Heart right ventricle (tissue), 16 donors: ENCODE measurements at regions of chr3 and their contacts with region 1.

Region 1: DNA sequence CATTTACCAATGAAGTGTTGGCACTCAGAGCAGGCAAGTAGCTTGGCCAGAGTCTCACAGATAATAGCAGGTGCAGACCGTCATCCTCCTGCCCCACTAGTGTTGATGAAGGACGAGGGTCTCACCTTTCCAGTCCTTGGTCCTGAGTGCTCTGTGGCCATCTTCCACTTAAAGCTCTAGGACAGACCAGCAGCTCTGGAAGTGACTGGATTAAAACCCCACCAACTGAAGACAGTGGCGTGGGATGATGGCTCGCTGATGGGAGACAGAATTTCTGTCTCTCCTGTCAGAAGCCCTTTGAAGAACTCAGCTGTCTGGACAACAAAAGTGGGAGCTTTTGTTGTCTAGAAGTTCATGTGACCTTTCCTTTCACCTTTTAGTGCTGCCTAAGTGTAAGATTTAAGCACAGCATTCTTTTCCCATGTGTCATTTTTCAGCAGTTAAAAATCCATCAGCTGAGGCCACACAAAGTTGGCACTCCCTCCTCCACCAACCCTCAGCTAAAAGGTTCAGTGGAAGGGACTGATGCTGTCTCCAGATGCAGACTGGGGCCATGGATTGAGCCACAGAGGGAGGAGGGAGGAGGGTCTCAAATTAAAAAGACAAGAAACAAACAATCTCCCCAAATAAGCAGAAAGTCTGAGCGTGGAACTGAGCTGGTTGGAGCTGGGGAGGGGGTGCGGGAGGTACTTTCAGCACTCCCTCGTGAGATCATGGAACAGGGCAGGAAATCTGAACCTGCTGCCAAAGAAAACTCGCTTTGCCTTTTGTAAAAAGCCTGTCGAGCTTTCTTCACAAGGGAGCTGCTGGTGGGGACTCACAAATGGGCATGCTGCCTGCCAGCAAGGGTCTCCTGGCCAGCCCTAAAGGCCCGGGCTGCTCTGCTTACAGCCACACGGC is 148.5 kb upstream of the CTDSPL start:
- DNase-seq: peak in 1 of 2 donors; percentile 46
- ATAC-seq: peak; percentile 15 to 73 (median 56)
- H3K4me3 ChIP-seq: no peak overlapping the region
- H3K27ac ChIP-seq: peak overlapping the region in 7 of 10 donors; percentile 36 to 79 (median 63)
- H3K4me1 ChIP-seq: peaks cover 12 to 56% (median 36%) of the 10 kb centered on the region in 9 donors
- H3K27me3 ChIP-seq: no peaks in the 10 kb centered on the region
- CTCF ChIP-seq: no peak

Region 2: GRCh38 chr3:37689645-37690356 is 23.4 kb before region 1 on chr3:
- intact Hi-C with region 1: loop called in 1 of 10 experiments (anchors 1 kb)
- DNase-seq: peak in 1 of 2 donors; percentile 28
- ATAC-seq: peak; percentile 31 to 96 (median 82)
- H3K4me3 ChIP-seq: no peak overlapping the region
- H3K27ac ChIP-seq: peak overlapping the region in 8 of 10 donors; percentile 27 to 54 (median 40)
- H3K4me1 ChIP-seq: peaks cover 0 to 24% (median 5%) of the 10 kb centered on the region in 9 donors
- H3K27me3 ChIP-seq: no peaks in the 10 kb centered on the region
- CTCF ChIP-seq: peak in 1 of 9 donors; percentile 14

Region 3: DNA sequence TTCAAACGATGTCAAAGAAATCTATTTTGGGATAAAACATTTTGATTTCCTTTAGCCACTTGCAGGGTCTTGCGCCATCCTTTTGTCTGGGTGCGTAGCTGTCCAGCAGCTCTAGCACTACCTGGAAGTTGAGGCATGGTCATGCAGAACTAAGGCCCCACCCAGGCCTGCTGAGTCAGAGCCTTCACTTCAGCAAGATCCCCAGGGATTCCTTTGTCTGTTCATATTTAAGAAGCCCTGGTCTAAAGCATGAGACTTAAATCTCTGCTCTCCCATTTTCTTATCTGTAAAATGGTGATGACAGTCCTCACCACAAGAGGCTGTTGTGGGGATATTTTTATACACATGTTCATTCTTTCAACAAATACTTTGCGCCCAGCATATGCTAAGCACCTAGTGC is 49.5 kb after region 1 on chr3:
- intact Hi-C with region 1: loop called in 1 of 10 experiments (anchors 2 kb)
- DNase-seq: no peak
- ATAC-seq: peak in 7 of 8 donors; percentile 45 to 72 (median 60)
- H3K4me3 ChIP-seq: no peak overlapping the region
- H3K27ac ChIP-seq: peak overlapping the region; percentile 8 to 97 (median 74)
- H3K4me1 ChIP-seq: peaks cover 15 to 60% (median 56%) of the 10 kb centered on the region in 9 donors
- H3K27me3 ChIP-seq: no peaks in the 10 kb centered on the region
- CTCF ChIP-seq: peak in 3 of 9 donors; percentile 10 to 29 (median 21)

Region 4: GRCh38 chr3:37974121-37975083 is 261.2 kb after region 1 on chr3:
- intact Hi-C with region 1: no loop called
- DNase-seq: peak; percentile 48 to 67
- ATAC-seq: peak; percentile 71 to 88 (median 81)
- H3K4me3 ChIP-seq: no peak overlapping the region
- H3K27ac ChIP-seq: peak overlapping the region in 6 of 10 donors; percentile 18 to 69 (median 56)
- H3K4me1 ChIP-seq: peaks cover 1 to 37% (median 17%) of the 10 kb centered on the region in 9 donors
- H3K27me3 ChIP-seq: no peaks in the 10 kb centered on the region
- CTCF ChIP-seq: peak; percentile 46 to 87 (median 77)